PC-9 (cell line): ENCODE measurements at regions of chr3 and their contacts with region 1.

Region 1: GRCh38 chr3:150538324-150539208 is 7.7 kb downstream of the SERP1 start:
- DNase-seq: no peak
- H3K4me3 ChIP-seq: no peak overlapping the region
- H3K27ac ChIP-seq: no peak overlapping the region
- H3K4me1 ChIP-seq: peaks cover under 1% of the 10 kb centered on the region
- H3K27me3 ChIP-seq: no peaks in the 10 kb centered on the region
- CTCF ChIP-seq: no peak

Region 2: DNA sequence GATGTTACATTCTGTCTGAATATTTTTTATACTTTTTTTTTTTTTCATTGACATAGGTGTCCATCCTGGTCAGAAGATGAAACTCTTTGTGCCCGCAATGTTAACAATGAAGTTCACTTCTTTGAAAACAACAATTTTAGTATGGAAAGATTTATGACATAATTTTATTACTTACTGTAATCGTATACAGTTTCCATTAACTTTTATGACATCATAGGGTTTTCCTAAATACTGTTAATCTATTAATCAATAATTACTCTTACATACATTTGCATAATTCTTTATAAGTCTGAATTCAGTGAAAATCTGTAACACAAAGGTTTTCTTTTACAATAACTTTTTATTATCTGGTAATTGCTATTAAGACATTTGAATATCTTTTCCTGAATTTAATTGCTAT is 25.7 kb after region 1 on chr3:
- CTCF ChIA-PET with region 1: no interaction called
- POLR2A ChIA-PET with region 1: no interaction called
- intact Hi-C with region 1: no loop called
- DNase-seq: no peak
- H3K4me3 ChIP-seq: no peak overlapping the region
- H3K27ac ChIP-seq: no peak overlapping the region
- H3K4me1 ChIP-seq: no peaks in the 10 kb centered on the region
- H3K27me3 ChIP-seq: no peaks in the 10 kb centered on the region
- CTCF ChIP-seq: no peak

Region 3: DNA sequence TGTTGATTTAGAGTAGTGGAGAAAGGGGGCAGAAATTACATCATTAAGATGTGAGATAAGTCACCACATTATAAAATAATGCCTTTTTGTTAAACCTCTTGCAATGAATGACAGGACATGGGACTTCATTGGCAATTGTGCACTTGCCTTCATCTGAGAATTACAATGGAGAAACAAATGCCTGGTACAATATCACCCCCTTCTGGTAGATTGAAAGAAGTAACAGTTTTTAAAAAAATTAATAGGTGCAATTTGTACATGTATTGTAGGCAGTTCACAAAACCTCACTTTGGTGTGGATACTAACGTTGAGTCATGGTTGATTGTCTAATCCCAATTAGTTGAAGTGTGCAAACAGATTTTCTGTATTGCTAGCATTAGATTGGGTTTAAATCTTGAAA is 744.4 kb after region 1 on chr3:
- CTCF ChIA-PET with region 1: no interaction called
- POLR2A ChIA-PET with region 1: no interaction called
- intact Hi-C with region 1: loop called (anchors 10 kb)
- DNase-seq: peak in 1 of 2 experiments; percentile 54
- H3K4me3 ChIP-seq: no peak overlapping the region
- H3K27ac ChIP-seq: no peak overlapping the region
- H3K4me1 ChIP-seq: peaks cover 8% of the 10 kb centered on the region
- H3K27me3 ChIP-seq: no peaks in the 10 kb centered on the region
- CTCF ChIP-seq: peak; percentile 91